ENCODE measurements at regions of chr13 and their contacts with region 1.

Region 1: DNA sequence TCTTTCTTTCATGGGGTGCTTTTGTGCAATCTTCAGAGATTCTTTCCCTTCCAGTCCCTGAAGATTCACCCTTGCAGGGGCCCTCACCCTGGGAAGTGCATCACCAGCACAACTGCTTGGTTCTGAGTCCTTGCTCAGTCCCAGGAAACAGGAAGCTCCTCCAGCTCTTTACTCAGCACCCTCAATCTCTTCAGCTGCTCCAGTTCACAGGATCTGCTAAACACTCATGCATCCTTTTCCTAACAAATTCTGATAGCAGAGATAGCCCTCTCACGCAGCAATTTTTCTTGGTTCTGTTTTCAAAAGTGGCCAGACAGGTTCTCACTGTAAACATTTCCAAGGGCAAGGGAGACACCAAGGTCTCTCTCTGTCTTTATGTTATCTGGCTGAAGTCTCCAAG is 823.1 kb downstream of the LIG4 start:
- DNase-seq: no peak
- H3K4me3 ChIP-seq: no peak overlapping the region
- H3K27ac ChIP-seq: no peak overlapping the region
- H3K4me1 ChIP-seq: no peaks in the 10 kb centered on the region
- H3K27me3 ChIP-seq: no peaks in the 10 kb centered on the region
- CTCF ChIP-seq: no peak
- EP300 ChIP-seq: no peak
- POLR2A ChIP-seq: no peak

Region 2: GRCh38 chr13:107373551-107373950 is 18.7 kb before region 1 on chr13:
- in situ Hi-C with region 1: no loop called
- intact Hi-C with region 1: loop called (anchors 1 kb)
- DNase-seq: no peak
- H3K4me3 ChIP-seq: no peak overlapping the region
- H3K27ac ChIP-seq: no peak overlapping the region
- H3K4me1 ChIP-seq: no peaks in the 10 kb centered on the region
- H3K27me3 ChIP-seq: no peaks in the 10 kb centered on the region
- CTCF ChIP-seq: peak in 2 of 5 experiments; percentile 19 to 24
- EP300 ChIP-seq: no peak
- POLR2A ChIP-seq: no peak

Measured in transverse colon (tissue), 4 donors.